ENCODE measurements at regions of chr18 and their contacts with region 1.

Region 1: DNA sequence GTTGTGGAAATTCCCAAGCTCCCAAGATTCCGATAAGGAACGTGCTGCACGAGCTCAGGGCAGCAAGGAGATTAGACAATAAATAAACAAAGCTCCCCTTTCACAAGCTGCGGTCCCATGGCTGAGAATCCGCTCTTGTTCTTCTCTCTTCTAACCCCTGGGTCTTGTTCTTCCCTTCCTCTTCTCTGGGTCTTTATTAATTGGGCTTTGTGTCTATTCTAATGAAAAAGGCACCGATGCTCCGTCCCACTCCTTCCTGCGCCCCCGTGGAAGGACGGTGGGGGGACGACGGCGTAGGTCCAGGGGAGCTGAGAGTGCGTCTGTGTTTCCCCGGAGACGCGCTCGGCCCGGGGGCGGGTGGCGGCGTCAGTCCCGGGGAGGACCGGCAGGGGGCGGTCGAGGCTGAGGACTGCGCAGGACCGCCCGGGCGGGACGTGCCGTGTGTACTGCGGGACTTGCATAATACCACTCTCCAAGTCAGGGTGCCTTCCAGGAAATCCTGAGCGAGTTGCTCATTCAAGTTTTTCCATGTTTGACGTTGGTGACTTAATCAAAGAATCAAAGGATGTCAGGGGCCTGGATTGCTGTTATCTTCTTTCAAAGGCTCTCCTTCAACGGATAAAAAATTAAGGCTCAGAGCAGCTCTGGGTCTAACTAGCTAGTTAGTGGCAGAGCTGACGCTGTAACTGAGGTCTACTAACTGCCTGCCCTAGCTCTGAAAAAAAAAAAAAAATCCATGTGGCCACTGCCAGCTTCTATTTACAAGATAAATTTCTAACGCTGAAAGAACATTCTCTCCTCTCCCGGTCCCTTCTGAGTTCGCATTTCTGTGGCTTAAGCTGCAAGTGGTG is 321.4 kb downstream of the TGIF1 start:
- DNase-seq: peak; percentile 62
- H3K4me3 ChIP-seq: peak overlapping the region; percentile 31
- H3K27me3 ChIP-seq: no peaks in the 10 kb centered on the region
- CTCF ChIP-seq: peak; percentile 84

Region 2: GRCh38 chr18:3498698-3499471 is 272.5 kb before region 1 on chr18:
- CTCF ChIA-PET with region 1: no interaction called
- POLR2A ChIA-PET with region 1: no interaction called
- DNase-seq: no peak
- H3K4me3 ChIP-seq: peak overlapping the region; percentile 44
- H3K27me3 ChIP-seq: no peaks in the 10 kb centered on the region
- CTCF ChIP-seq: no peak

Region 3: GRCh38 chr18:3710712-3711269 is 60.6 kb before region 1 on chr18:
- CTCF ChIA-PET with region 1: interaction called, 13 read pairs
- POLR2A ChIA-PET with region 1: no interaction called
- DNase-seq: no peak
- H3K4me3 ChIP-seq: no peak overlapping the region
- H3K27me3 ChIP-seq: peaks cover 3% of the 10 kb centered on the region
- CTCF ChIP-seq: no peak

Region 4: DNA sequence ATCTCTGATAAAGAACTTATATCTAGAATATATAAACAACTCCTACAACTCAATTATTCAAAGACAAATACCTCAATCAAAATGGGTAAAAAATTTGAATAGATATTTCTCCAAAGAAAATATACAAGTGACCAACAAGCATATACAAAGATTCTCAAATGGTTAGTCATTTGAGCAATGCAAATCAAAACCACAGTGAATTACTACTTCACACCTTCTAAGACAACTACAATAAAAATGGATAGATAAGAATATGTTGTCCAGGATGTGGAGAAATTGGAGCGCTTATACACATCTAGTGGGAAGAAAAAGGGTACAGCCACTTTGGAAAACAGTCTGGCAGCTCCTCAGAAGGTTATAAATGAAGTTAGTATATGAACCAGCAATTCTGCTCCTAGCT is 11.6 kb after region 1 on chr18:
- CTCF ChIA-PET with region 1: interaction called, 20 read pairs
- POLR2A ChIA-PET with region 1: no interaction called
- DNase-seq: no peak
- H3K4me3 ChIP-seq: no peak overlapping the region
- H3K27me3 ChIP-seq: 0 out of 2 replicates have a peak, but pooled peaks cover 1% of the 10 kb centered on the region
- CTCF ChIP-seq: no peak

Region 5: DNA sequence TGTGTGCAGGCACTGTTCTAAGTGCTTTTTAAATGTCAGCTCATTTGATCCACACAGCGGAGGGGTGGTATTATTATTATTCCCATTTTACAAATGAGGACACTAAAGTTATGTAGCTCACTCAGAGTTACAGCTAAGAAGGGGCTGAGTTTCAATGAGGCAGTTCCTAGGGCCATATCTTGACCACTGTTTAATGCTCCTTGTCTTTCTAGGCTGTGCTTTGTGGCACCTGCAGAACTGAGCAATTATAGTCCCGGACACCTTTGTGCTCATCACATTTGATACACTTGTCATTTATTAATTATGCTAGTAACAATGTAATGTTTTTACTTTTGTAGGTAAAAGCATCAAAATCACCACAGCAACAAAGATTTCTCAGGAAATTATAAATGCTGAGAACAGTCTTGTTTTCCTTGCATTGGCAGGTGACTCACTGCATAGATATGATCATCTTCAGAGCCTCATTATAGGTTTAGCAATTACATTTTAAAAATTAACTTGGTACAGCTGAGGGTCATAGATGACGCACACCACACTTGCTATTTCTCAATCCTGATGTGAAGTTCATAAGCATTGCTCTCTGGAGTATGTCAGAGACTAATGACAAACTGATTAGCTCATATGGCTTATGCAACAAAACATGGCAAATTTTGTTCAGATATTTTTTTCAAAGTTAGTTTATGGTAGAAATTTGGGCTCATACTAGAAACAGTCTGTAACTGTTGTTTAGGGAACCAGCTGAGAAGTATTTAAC is 45.4 kb after region 1 on chr18:
- CTCF ChIA-PET with region 1: interaction called, 10 read pairs
- POLR2A ChIA-PET with region 1: interaction called, 9 read pairs
- DNase-seq: peak; percentile 97
- H3K4me3 ChIP-seq: no peak overlapping the region
- H3K27me3 ChIP-seq: no peaks in the 10 kb centered on the region
- CTCF ChIP-seq: no peak

Region 6: DNA sequence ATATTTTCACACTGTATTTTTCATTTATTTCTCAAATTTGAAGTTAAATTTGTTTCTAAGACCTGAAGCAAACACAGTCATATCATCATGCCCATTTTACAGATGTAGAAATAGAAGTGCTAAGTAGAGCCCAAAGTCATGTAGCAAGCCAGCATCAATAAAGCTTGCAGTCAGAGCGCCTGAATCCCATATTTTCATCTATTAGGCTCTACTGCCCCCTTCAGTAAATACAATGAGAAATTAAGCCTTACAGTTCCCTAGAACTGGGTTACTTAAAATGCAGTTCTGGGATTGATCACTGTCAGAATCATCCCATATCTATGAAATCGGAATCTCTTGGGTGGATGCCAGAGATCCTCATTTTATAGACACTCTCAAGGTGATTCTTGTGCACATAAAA is 98.5 kb after region 1 on chr18:
- CTCF ChIA-PET with region 1: interaction called, 151 read pairs
- POLR2A ChIA-PET with region 1: no interaction called
- DNase-seq: peak; percentile 12
- H3K4me3 ChIP-seq: no peak overlapping the region
- H3K27me3 ChIP-seq: no peaks in the 10 kb centered on the region
- CTCF ChIP-seq: peak; percentile 47

Region 7: GRCh38 chr18:3995476-3996102 is 224.2 kb after region 1 on chr18:
- CTCF ChIA-PET with region 1: interaction called, 76 read pairs
- POLR2A ChIA-PET with region 1: no interaction called
- DNase-seq: no peak
- H3K4me3 ChIP-seq: no peak overlapping the region
- H3K27me3 ChIP-seq: no peaks in the 10 kb centered on the region
- CTCF ChIP-seq: peak; percentile 89